ENCODE measurements at regions of chr18 and their contacts with region 1.

Region 1: DNA sequence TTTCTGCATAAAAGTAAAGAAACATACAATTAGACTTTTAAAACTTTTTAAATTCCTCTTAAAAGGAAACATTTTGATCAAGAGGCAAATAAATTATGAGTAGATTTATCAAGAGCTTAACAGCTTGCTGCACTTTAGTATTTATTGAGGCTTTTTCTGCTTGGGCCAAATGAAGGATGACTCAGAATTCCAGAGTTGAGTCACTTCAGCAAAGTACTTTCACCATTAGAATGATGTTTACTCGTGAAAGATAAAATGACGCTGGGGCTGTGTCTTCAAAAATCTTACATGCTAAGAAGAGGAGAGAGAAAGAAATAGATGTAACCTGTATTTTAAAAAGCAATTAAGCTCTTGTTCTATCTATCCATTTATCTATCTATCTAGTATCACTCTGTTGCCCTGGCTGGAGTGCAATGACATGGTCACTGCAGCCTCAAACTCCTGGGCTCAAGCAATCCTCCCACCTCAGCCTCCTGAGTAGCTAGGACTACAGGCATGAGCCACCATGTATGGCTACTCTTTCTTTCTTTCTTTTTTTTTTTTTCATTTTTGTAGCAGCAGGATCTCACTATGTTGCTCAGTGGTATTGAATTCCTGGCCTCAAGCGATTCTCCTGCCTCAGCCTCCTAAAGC is 75.3 kb upstream of the RIOK3 start:
- DNase-seq: no peak

Region 2: DNA sequence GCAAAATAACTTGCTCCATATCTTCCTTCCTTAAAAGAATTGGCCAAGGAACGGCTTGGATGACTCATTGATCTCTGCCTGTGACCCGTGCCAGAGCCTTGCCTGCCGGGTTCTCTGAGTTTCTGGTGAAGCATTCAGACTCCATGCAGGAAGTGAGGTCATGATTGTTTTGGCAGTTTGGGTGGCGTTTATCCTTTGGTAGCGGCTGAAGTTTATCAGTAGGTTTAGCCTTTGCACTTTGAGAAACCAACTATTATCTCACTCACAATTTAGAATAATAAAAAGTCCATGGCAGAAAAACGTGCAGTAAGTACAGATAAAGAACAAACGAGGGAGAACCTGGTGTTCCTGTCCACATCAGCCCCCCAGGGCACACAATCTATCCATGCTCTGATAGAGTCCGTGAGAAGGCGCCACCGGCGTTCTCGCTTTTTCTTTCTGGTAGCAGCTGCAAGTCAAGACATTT is 945.1 kb before region 1 on chr18:
- intact Hi-C with region 1: no loop called
- DNase-seq: peak; percentile 93

Region 3: DNA sequence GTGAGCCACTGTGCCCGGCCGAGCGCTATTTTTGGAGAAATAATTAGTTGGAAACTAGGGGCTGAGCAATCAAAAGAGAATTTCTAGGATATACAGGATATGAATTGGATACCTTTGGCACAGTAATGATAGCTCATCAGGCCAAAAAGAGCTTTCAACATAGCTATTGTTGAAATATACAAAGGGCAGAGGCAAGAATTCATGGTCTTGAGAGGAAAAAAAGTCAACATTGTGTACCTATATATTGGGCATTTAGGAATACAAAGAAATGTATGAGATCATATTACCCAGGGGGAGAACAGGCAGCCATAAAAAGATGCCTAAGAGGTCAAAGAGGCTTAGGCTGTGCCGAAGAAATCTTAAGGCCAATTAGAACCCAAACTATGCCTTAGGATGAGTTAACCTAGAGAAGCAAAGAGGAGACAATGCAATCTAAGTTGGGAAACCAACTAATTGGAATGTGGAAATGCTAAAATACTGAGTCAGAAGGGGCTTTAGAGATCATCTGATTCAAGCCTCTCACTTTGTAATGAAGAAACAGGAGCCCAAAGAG is 345.7 kb before region 1 on chr18:
- intact Hi-C with region 1: loop called in 1 of 2 experiments (anchors 10 kb)
- DNase-seq: no peak

Region 4: GRCh38 chr18:23311351-23312121 is 66.2 kb before region 1 on chr18:
- intact Hi-C with region 1: loop called in 1 of 2 experiments (anchors 5 kb)
- DNase-seq: peak; percentile 91